GM13976 (cell line): ENCODE measurements at regions of chr16 and their contacts with region 1.

Region 1: DNA sequence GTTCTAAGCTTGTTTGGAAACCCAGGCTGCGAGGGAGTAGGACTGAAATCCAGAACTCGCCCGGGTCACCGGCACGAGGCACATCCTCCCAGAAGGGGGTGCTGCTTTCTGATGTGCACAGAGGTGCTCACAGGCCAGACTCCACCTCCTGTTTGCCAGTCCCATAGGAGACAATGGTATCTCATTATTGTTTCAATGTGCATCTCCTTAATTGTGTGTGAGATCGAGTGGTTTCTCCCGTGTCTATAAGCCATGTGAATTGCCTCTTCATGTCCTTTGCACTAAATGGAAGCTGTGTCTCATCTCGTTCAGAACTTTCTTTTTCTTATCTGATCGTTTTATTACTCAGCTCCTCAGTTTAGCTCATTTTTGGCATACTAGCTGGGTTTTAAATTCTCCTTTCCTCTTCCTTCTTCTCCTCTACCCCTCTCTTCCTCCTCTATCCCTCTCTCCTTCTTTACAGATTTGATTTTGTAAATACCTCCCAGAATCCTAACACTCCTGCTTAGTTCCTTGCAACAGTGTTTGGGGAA is 32.1 kb upstream of the PRKCB start:
- DNase-seq: peak; percentile 75
- CTCF ChIP-seq: peak; percentile 73

Region 2: GRCh38 chr16:24010440-24011089 is 206.9 kb after region 1 on chr16:
- in situ Hi-C with region 1: loop called (anchors 5 kb)
- DNase-seq: peak; percentile 58
- CTCF ChIP-seq: peak; percentile 84